ENCODE measurements at regions of chr18 and their contacts with region 1.

Region 1: DNA sequence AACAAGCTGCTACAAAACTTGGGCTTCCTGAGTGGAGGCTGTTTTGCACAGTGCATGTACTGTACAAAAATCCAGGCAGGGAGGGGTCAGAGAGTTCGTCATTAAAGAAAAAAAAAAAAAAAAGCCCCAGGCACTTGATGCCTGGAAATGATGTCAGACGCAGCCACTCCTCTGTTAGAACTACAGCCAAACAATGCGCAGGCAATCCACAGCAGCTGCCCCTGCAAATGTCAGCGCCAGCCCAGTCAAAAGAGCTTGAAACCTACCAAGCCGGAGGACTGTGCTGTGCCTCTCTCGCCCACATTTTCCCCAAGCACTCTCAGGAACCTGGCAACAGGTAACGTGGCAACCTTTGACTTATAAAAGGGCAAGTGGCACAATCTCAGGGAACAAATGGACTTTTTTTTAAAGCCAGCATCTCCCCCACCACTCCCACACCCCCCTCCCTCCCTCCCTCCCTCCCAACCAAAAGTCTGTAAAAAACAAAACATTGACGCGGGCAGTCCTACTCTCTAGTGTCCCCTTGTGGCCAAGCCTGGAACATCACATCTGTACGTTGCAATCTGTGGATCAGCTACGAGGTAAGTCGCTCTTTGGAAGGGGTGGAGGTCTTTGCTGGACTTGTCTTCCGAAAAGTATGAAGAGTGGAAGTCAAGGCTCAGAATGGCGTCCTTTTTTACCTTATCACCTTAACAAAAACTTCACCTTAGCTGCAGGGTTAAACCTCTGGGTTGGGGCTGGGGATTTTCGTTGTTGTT is 144.1 kb downstream of the TGIF1 start:
- DNase-seq: peak; percentile 96
- ATAC-seq: peak; percentile 80
- H3K4me3 ChIP-seq: peak overlapping the region; percentile 43 to 80 (median 64)
- H3K4me3 Mint-ChIP-seq: peak overlapping the region; percentile 91
- H3K27ac ChIP-seq: peak overlapping the region; percentile 88 to 96
- H3K27ac Mint-ChIP-seq: peak overlapping the region; percentile 98
- H3K4me1 ChIP-seq: peaks cover 43 to 49% of the 10 kb centered on the region in 2 donors
- H3K4me1 Mint-ChIP-seq: peaks cover 53% of the 10 kb centered on the region
- H3K27me3 ChIP-seq: no peaks in the 10 kb centered on the region
- H3K27me3 Mint-ChIP-seq: no peaks in the 10 kb centered on the region
- CTCF ChIP-seq: peak; percentile 84

Region 2: DNA sequence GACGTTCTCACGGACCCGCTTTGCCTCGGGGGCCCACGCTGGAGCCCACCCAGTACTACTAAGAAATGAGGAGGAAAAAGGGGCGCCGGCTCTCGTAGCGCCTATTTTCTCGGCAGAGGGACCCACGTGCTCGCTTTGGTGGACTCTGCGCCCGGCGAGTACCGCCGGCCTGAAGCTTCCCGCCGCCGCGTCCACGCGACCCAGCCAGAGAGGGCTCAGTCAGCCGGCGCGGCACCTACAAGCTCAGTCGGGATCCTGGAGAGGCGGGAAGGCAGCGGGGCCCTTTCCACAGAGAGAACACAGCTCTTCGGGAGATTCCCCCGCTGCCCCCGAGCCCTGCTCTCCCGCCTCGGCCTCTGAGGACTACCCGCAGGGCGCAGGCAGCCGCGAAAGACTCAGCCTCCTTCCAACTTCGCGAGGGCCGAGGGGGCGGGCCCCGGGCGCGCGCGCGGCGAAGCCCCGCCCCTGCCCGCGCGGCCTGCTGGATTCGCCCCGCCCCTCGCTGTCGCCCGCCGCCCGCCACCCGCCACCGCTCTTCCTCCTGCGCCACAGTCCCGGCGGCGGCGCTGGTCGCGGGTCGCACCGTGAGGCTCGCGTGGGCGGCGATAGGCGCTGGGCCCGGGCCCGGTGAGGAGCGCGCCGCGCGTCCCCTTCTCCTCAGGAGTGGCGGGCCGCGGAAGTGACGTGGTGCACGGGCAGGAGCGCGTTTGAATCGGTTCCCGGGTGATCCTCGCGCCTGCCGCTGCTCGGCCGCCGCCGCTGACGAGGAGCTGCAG is 938.7 kb before region 1 on chr18 and contains the start of gene SMCHD1:
- CTCF ChIA-PET with region 1: no interaction called
- POLR2A ChIA-PET with region 1: interaction called, 5 read pairs
- intact Hi-C with region 1: loop called (anchors 10 kb)
- DNase-seq: peak; percentile 96
- ATAC-seq: peak; percentile 78
- H3K4me3 ChIP-seq: peak within 1 kb of the TSS; percentile 86 to 99 (median 96)
- H3K4me3 Mint-ChIP-seq: peak within 1 kb of the TSS; percentile 98
- H3K27ac ChIP-seq: peak within 1 kb of the TSS; percentile 97 to 100
- H3K27ac Mint-ChIP-seq: peak within 1 kb of the TSS; percentile 98
- H3K4me1 ChIP-seq: peaks cover 32 to 33% of the 10 kb centered on the region in 2 donors
- H3K4me1 Mint-ChIP-seq: peaks cover 37% of the 10 kb centered on the region
- H3K27me3 ChIP-seq: no peaks in the 10 kb centered on the region
- H3K27me3 Mint-ChIP-seq: no peaks in the 10 kb centered on the region
- CTCF ChIP-seq: no peak
- total RNA-seq, gene SMCHD1: 380 and 443 TPM in 2 replicates

Region 3: DNA sequence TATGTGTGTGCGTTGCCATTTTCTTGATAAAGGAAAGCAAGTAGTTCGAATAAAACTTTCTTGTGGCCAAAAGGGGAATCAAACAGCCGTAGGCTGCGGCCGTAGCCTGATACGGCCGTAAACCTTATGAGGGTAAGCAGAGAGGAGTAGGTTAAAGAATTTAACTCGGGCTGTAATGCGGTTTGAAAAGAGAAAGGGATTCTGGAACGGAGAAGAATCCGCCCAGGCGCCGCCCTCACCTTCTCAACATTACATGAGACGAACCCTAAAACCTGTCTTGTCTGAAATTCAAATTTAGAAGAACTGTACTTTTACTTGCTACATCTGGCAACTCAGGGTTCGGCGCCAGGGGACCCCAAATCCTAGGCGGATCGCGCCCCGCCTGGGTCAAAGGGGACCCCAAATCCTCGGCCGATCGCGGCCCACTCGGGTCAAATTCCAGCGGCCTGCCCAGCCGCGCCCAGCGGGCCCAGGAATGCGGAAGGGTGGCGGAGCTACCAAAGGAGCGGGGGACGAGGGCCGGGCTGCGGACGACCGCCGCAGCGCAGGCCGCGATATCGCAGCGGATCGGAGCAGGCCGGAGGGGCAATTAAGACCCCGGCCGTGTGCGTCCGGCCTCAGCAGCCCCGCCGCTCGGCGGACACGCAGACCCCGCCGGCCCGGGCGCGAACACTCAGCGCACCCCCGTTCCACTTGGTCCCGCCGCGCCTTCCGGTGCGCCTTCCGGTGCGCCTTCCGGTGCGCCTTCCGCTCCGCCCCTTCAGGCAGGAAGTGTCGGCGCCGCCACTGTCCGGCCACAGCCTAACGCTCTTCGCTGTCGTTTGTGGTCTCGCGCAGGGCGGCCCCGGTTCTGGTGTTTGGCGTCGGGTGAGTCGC is 332.5 kb before region 1 on chr18 and contains the start of gene MYL12B:
- CTCF ChIA-PET with region 1: interaction called, 3 read pairs
- POLR2A ChIA-PET with region 1: interaction called, 6 read pairs
- intact Hi-C with region 1: loop called (anchors 5 kb)
- DNase-seq: peak; percentile 93
- ATAC-seq: peak; percentile 80
- H3K4me3 ChIP-seq: peak within 1 kb of the TSS; percentile 75 to 96 (median 86)
- H3K4me3 Mint-ChIP-seq: peak within 1 kb of the TSS; percentile 88
- H3K27ac ChIP-seq: peak within 1 kb of the TSS; percentile 86 to 97
- H3K27ac Mint-ChIP-seq: peak within 1 kb of the TSS; percentile 100
- H3K4me1 ChIP-seq: peaks cover 70 to 73% of the 10 kb centered on the region in 2 donors
- H3K4me1 Mint-ChIP-seq: peaks cover 77% of the 10 kb centered on the region
- H3K27me3 ChIP-seq: no peaks in the 10 kb centered on the region
- H3K27me3 Mint-ChIP-seq: no peaks in the 10 kb centered on the region
- CTCF ChIP-seq: no peak
- total RNA-seq, gene MYL12B: 124 and 127 TPM in 2 replicates

Region 4: GRCh38 chr18:3297025-3297984 is 296.8 kb before region 1 on chr18:
- CTCF ChIA-PET with region 1: interaction called, 56 read pairs
- POLR2A ChIA-PET with region 1: interaction called, 11 read pairs
- intact Hi-C with region 1: loop called (anchors 1 kb)
- DNase-seq: peak; percentile 90
- ATAC-seq: peak; percentile 99
- H3K4me3 ChIP-seq: peak overlapping the region; percentile 53 to 88 (median 85)
- H3K4me3 Mint-ChIP-seq: peak overlapping the region; percentile 96
- H3K27ac ChIP-seq: no peak overlapping the region
- H3K27ac Mint-ChIP-seq: peak overlapping the region; percentile 80
- H3K4me1 ChIP-seq: peaks cover 7 to 10% of the 10 kb centered on the region in 2 donors
- H3K4me1 Mint-ChIP-seq: peaks cover 13% of the 10 kb centered on the region
- H3K27me3 ChIP-seq: peaks cover 0 to 7% (median 2%) of the 10 kb centered on the region in 4 experiments
- H3K27me3 Mint-ChIP-seq: peaks cover 30% of the 10 kb centered on the region
- CTCF ChIP-seq: peak; percentile 89

Region 5: GRCh38 chr18:3380384-3380961 is 213.6 kb before region 1 on chr18:
- CTCF ChIA-PET with region 1: interaction called, 4 read pairs
- POLR2A ChIA-PET with region 1: interaction called, 8 read pairs
- intact Hi-C with region 1: loop called (anchors 5 kb)
- DNase-seq: peak; percentile 37
- ATAC-seq: peak; percentile 31
- H3K4me3 ChIP-seq: no peak overlapping the region
- H3K4me3 Mint-ChIP-seq: no peak overlapping the region
- H3K27ac ChIP-seq: no peak overlapping the region
- H3K27ac Mint-ChIP-seq: no peak overlapping the region
- H3K4me1 ChIP-seq: peaks cover 0 to 13% of the 10 kb centered on the region in 2 donors
- H3K4me1 Mint-ChIP-seq: peaks cover 15% of the 10 kb centered on the region
- H3K27me3 ChIP-seq: no peaks in the 10 kb centered on the region
- H3K27me3 Mint-ChIP-seq: no peaks in the 10 kb centered on the region
- CTCF ChIP-seq: peak; percentile 21

Region 6: DNA sequence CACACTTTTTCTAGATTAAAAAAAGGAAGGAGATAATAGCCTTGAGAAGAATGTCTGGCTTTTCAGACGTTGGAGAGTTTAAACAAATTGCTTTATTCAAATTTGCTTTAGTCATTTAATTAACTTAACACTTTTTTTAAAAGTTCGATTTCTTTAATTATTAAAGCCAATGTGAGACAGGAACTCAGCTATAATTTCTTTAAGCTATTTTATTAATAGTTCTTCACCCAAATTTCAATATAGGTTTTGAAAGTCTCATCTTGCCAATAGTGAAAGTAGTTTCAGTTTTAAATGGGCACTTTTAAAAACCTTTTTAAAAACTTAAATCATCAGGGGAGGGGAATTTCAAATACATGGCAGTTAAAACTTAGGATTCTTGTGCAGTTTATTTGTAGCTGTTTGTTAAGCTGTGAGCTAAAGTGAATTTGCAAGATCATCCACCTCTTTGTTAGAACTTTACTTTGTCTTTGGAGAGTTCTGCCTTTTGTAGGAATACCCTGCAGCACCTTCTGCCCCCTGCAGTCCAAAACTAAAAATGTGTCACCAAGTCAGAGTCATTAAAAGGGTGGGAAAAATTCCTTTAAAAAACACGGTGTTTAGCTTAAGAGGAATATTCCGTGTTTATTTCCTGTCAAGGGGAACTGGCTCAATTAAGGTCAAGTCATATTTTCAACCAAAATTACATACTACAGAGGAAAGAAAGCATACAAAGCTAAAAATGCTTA is 139.6 kb before region 1 on chr18:
- CTCF ChIA-PET with region 1: interaction called, 92 read pairs
- POLR2A ChIA-PET with region 1: interaction called, 73 read pairs
- intact Hi-C with region 1: loop called (anchors 1 kb)
- DNase-seq: peak; percentile 77
- ATAC-seq: no peak
- H3K4me3 ChIP-seq: peak overlapping the region; percentile 23 to 79 (median 55)
- H3K4me3 Mint-ChIP-seq: peak overlapping the region; percentile 99
- H3K27ac ChIP-seq: peak overlapping the region; percentile 53 to 82
- H3K27ac Mint-ChIP-seq: peak overlapping the region; percentile 93
- H3K4me1 ChIP-seq: peaks cover 8 to 40% of the 10 kb centered on the region in 2 donors
- H3K4me1 Mint-ChIP-seq: peaks cover 44% of the 10 kb centered on the region
- H3K27me3 ChIP-seq: no peaks in the 10 kb centered on the region
- H3K27me3 Mint-ChIP-seq: no peaks in the 10 kb centered on the region
- CTCF ChIP-seq: peak; percentile 89

Region 7: DNA sequence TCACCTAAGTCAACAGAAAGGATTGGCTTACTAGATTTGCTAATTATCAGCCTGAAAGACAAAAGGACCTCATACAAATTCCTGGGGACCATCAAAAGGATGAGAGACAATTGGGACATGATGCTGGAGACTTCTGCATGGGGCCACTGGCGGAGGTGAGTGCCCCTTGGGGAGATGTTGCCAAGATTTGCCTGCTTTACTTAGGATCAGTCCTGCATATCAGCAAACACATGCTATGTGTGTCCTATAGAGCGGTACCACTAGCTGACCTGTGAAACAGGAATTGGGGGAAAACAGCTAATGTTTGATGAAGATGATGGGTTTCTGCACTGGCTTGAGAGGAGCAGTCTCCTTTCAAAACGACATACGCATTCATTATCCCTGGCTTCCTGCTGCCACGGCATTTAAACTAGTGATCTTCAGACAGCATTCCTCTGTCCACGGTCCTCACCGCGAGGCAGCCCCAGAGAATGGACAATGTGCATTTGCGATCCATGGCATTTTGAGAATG is 39.9 kb before region 1 on chr18:
- CTCF ChIA-PET with region 1: no interaction called
- POLR2A ChIA-PET with region 1: no interaction called
- intact Hi-C with region 1: no loop called
- DNase-seq: no peak
- ATAC-seq: no peak
- H3K4me3 ChIP-seq: no peak overlapping the region
- H3K4me3 Mint-ChIP-seq: no peak overlapping the region
- H3K27ac ChIP-seq: no peak overlapping the region
- H3K27ac Mint-ChIP-seq: no peak overlapping the region
- H3K4me1 ChIP-seq: no peaks in the 10 kb centered on the region
- H3K4me1 Mint-ChIP-seq: no peaks in the 10 kb centered on the region
- H3K27me3 ChIP-seq: no peaks in the 10 kb centered on the region
- H3K27me3 Mint-ChIP-seq: no peaks in the 10 kb centered on the region
- CTCF ChIP-seq: no peak

Region 8: DNA sequence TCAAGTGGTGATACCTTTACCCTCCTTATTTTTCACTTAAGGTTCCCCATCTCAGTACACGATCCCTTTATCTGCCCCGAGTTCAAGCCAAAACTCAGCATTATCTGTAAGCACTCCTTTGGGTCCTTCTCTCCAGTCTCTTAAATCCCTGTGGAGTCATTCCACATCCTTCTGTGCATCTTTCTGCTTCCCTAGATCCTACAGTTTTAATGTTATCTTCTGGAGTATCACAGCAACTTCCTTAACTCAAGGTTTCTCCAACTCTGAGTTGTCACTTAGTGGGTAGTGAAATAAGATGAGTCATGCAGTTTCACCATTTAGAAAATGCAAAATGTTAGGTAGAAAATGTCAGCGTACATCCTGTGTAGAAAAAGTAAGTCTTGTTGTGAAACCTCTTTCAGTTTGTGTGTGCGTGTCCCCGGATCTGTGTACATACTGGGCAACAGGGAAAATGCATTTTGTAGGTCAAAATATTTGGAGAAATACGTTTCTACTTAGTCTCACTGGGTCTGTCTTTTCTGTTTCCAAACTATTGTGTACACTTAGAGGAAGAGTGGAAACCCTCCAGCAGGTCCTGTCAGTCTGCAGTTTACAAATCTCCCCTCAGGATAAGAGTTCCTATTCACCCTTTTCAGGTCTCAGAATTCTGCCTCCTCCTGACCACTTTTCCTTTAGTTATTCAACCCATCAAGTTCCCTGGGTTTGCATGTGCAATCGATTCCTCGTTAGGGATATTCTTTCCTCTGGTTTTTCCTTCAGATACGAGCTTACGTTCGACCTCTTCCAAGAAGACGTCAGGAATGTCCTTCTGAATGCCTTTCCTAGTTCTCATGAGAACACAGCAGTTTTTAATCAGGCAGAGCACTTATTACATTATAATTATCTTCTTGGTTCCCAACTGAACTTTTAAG is 10.7 kb after region 1 on chr18:
- CTCF ChIA-PET with region 1: interaction called, 27 read pairs
- POLR2A ChIA-PET with region 1: interaction called, 8 read pairs
- intact Hi-C with region 1: loop called (anchors 1 kb)
- DNase-seq: peak; percentile 52
- ATAC-seq: peak; percentile 68
- H3K4me3 ChIP-seq: peak overlapping the region; percentile 4 to 81 (median 53)
- H3K4me3 Mint-ChIP-seq: no peak overlapping the region
- H3K27ac ChIP-seq: peak overlapping the region; percentile 16 to 21
- H3K27ac Mint-ChIP-seq: no peak overlapping the region
- H3K4me1 ChIP-seq: peaks cover 36 to 38% of the 10 kb centered on the region in 2 donors
- H3K4me1 Mint-ChIP-seq: peaks cover 5% of the 10 kb centered on the region
- H3K27me3 ChIP-seq: no peaks in the 10 kb centered on the region
- H3K27me3 Mint-ChIP-seq: no peaks in the 10 kb centered on the region
- CTCF ChIP-seq: no peak

Region 9: DNA sequence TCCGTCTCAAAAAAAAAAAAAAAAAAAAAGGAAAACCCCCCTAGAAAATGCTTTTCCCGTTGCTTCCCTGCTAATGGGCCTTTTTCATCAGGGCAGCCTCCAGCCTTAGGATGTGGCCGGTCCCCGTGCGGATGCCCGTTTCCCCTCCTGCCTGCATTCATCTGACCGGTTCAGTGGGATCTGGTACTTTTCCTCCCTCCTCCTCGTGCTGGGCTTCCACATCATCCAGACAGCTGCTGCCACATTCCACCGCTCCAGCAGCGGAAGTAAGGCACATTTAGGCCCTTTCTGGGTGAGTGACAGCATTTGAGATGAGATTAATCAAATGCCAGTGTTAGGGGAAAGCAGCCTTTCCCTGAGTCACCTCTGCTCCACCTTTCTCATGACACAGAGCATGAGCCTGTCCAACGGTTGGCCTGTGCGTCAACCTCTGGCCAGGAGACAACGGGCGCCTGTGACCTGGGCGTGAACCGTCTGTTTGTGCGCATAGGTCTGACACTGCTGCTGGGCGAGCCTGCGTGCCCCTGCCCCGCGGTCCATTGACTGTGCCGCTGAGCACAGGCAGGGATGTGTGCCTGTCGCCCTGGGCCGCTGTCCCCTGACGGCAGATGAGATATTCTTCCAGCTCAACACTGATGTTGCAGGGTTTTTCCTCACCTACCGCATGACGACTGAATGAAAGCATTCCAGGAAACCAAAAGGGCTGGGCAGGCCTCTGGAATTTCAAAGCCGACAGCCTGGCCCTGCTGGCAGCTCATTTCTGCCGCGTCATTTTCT is 29.9 kb after region 1 on chr18:
- CTCF ChIA-PET with region 1: no interaction called
- POLR2A ChIA-PET with region 1: no interaction called
- intact Hi-C with region 1: no loop called
- DNase-seq: no peak
- ATAC-seq: no peak
- H3K4me3 ChIP-seq: no peak overlapping the region
- H3K4me3 Mint-ChIP-seq: no peak overlapping the region
- H3K27ac ChIP-seq: no peak overlapping the region
- H3K27ac Mint-ChIP-seq: no peak overlapping the region
- H3K4me1 ChIP-seq: no peaks in the 10 kb centered on the region
- H3K4me1 Mint-ChIP-seq: peaks cover 4% of the 10 kb centered on the region
- H3K27me3 ChIP-seq: peaks cover 0 to 6% (median 0%) of the 10 kb centered on the region in 4 experiments
- H3K27me3 Mint-ChIP-seq: peaks cover 5% of the 10 kb centered on the region
- CTCF ChIP-seq: no peak